ENCODE measurements at regions of chr2 and their contacts with region 1.

Region 1: GRCh38 chr2:241584423-241584822 is 25.9 kb downstream of the BOK start:
- DNase-seq: peak; percentile 89

Region 2: GRCh38 chr2:241489733-241490680 is 94.4 kb before region 1 on chr2:
- in situ Hi-C with region 1: loop called (anchors 10 kb)
- DNase-seq: no peak

Region 3: DNA sequence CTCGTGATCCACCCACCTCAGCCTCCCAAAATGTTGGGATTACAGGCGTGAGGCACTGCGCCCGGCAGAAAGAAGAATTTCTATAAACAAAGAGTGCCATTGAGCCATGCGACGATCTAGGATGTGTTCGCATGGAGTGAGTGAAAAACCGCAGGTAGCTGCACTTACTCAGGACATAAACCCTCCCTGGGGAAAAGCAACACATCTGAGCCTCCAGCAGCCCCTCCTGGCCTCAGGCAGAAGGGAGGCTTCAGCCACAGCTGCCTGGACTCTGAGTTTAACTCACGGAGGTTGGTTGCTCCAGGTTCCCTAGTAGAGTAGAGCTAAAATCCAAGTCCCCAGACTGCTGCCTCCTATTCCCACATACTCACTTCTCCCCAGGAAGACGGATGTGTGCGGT is 64.8 kb before region 1 on chr2:
- in situ Hi-C with region 1: no loop called
- DNase-seq: no peak

Region 4: DNA sequence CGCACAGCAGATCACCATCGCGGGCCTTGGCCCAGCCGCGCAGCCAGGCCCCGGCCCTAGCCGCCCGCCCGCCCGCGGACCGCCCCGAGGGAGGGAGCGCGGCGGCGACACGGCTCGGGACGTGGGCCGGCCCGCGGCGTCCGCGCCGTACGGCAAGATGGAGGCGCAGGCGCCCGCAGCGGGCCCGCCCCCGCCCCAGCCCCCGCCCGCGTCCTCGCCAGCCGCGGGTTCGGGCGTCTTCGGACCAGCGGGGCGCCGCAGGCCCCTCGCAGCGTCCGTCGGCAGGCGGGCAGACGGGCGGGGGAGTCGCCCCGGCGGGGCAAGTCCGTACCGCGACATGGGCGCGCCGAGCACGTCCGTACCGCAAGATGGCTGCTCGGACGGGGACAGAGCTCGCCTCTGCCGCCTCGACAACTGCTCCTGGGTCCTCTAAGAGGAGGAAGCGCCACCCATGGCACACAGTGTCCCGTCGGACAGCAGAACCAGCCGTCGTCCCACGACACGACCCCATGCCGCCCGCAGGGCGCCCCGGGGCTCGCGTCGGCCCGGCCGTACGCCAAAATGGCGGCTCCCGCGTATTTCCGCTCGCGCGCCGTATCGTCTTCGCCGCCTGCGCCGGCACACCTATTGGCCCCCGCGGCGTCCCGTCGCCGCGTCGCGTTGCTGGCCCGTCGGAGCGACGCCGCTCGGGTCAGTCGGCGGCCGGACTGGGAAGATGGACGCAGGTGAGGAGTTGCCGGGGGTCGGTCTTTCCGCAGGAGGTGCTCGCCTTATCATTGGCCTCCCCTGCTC is 52.8 kb after region 1 on chr2 and contains the starts of genes ATG4B and THAP4:
- in situ Hi-C with region 1: no loop called
- DNase-seq: peak; percentile 87
- total RNA-seq, gene ATG4B: 68.3 and 77.2 TPM in 2 replicates
- total RNA-seq, gene THAP4: 74.7 and 87.0 TPM in 2 replicates

Measured in Caki2 (cell line).